ENCODE measurements at regions of chr3 and their contacts with region 1.

Region 1: GRCh38 chr3:9946112-9947024 is 5.8 kb downstream of the PRRT3 start:
- DNase-seq: peak; percentile 96
- H3K4me3 ChIP-seq: peak overlapping the region; percentile 76
- H3K27ac ChIP-seq: peak overlapping the region; percentile 75
- H3K4me1 ChIP-seq: no peaks in the 10 kb centered on the region
- H3K27me3 ChIP-seq: no peaks in the 10 kb centered on the region
- CTCF ChIP-seq: peak; percentile 77

Region 2: GRCh38 chr3:9792405-9793160 is 153.8 kb before region 1 on chr3 and contains the starts of genes ARPC4 and TADA3:
- CTCF ChIA-PET with region 1: no interaction called
- POLR2A ChIA-PET with region 1: no interaction called
- intact Hi-C with region 1: no loop called
- DNase-seq: peak; percentile 97
- H3K4me3 ChIP-seq: peak within 1 kb of the TSS; percentile 99
- H3K27ac ChIP-seq: peak within 1 kb of the TSS; percentile 99
- H3K4me1 ChIP-seq: peaks cover 17% of the 10 kb centered on the region
- H3K27me3 ChIP-seq: no peaks in the 10 kb centered on the region
- CTCF ChIP-seq: no peak
- total RNA-seq, gene ARPC4: 128 and 152 TPM in 2 replicates
- total RNA-seq, gene TADA3: 46.1 and 49.6 TPM in 2 replicates

Region 3: GRCh38 chr3:9843715-9844438 is 102.5 kb before region 1 on chr3 and contains the start of gene RPUSD3:
- CTCF ChIA-PET with region 1: no interaction called
- POLR2A ChIA-PET with region 1: no interaction called
- intact Hi-C with region 1: loop called (anchors 2 kb)
- DNase-seq: peak; percentile 96
- H3K4me3 ChIP-seq: peak within 1 kb of the TSS; percentile 77
- H3K27ac ChIP-seq: peak within 1 kb of the TSS; percentile 63
- H3K4me1 ChIP-seq: no peaks in the 10 kb centered on the region
- H3K27me3 ChIP-seq: no peaks in the 10 kb centered on the region
- CTCF ChIP-seq: no peak
- total RNA-seq, gene RPUSD3: 46.9 and 67.2 TPM in 2 replicates

Region 4: DNA sequence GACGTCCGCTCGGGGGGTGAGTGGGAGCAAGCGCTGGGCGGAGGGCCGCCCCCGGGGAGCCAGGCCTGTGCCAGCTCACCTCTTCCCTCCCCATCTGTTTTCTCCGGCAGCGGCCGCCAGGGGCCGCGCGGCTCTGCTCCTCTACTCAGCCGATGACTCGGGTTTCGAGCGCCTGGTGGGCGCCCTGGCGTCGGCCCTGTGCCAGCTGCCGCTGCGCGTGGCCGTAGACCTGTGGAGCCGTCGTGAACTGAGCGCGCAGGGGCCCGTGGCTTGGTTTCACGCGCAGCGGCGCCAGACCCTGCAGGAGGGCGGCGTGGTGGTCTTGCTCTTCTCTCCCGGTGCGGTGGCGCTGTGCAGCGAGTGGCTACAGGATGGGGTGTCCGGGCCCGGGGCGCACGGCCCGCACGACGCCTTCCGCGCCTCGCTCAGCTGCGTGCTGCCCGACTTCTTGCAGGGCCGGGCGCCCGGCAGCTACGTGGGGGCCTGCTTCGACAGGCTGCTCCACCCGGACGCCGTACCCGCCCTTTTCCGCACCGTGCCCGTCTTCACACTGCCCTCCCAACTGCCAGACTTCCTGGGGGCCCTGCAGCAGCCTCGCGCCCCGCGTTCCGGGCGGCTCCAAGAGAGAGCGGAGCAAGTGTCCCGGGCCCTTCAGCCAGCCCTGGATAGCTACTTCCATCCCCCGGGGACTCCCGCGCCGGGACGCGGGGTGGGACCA is 13.4 kb before region 1 on chr3:
- CTCF ChIA-PET with region 1: interaction called, 27 read pairs
- POLR2A ChIA-PET with region 1: no interaction called
- intact Hi-C with region 1: no loop called
- DNase-seq: peak; percentile 88
- H3K4me3 ChIP-seq: peak overlapping the region; percentile 65
- H3K27ac ChIP-seq: peak overlapping the region; percentile 87
- H3K4me1 ChIP-seq: peaks cover 15% of the 10 kb centered on the region
- H3K27me3 ChIP-seq: no peaks in the 10 kb centered on the region
- CTCF ChIP-seq: peak; percentile 83

Region 5: GRCh38 chr3:10505050-10505790 is 558.9 kb after region 1 on chr3 and contains the start of gene ATP2B2:
- CTCF ChIA-PET with region 1: no interaction called
- POLR2A ChIA-PET with region 1: no interaction called
- intact Hi-C with region 1: no loop called
- DNase-seq: peak; percentile 27
- H3K4me3 ChIP-seq: peak within 1 kb of the TSS; percentile 30
- H3K27ac ChIP-seq: no peak within 1 kb of the TSS
- H3K4me1 ChIP-seq: no peaks in the 10 kb centered on the region
- H3K27me3 ChIP-seq: peaks cover 20% of the 10 kb centered on the region
- CTCF ChIP-seq: no peak
- total RNA-seq, gene ATP2B2: 0.17 and 0.35 TPM in 2 replicates